Sigmoid colon (tissue), 7 donors: ENCODE measurements at regions of chr6 and their contacts with region 1.

Region 1: DNA sequence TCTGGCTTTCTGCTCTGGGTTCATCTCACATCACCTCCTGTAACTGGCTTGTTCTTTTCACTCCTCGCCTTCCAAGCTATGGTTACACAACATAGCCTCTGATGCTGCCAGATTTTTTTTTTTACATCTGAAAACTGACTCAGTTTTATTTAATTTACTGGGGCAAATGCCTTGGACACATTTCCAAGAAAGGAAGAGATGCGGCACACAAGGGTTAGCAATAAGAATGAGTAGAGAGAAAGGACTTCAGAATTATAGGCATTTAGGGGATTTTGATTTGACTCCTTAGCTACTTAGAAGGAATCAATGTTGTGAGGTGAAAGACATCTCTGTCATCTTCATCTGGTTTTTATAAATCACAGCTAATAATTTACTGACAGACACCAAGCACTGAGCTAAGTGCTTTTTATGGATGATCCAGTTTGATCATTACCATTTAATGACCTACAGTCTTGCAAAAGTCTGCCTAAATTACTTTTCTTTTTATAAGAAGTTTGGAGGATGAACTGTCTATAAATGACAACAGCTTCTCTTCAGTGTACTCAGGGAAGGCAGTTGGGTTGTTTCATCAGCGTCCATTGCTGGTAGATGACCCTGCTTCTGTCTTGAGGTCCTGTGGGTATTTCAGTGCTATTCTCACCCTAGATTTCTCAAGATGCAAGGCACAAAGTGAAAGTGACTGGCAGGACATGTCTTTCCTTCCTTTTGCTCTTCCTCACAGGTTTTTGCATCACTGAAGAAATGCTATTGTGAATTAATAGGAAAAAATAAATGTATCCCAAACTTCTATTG is 31.1 kb downstream of the LAMA4 start:
- DNase-seq: no peak
- H3K4me3 ChIP-seq: no peak overlapping the region
- H3K27ac ChIP-seq: peak overlapping the region; percentile 79 to 89 (median 84)
- H3K4me1 ChIP-seq: peaks cover 0 to 99% (median 94%) of the 10 kb centered on the region in 4 donors
- H3K27me3 ChIP-seq: no peaks in the 10 kb centered on the region
- CTCF ChIP-seq: no peak
- EP300 ChIP-seq: peak in 3 of 4 donors; percentile 32 to 64 (median 37)
- POLR2A ChIP-seq: no peak

Region 2: GRCh38 chr6:112245511-112246203 is 22.4 kb after region 1 on chr6:
- intact Hi-C with region 1: loop called (anchors 1 kb)
- DNase-seq: no peak
- H3K4me3 ChIP-seq: no peak overlapping the region
- H3K27ac ChIP-seq: peak overlapping the region; percentile 70 to 95 (median 91)
- H3K4me1 ChIP-seq: peaks cover 0 to 95% (median 90%) of the 10 kb centered on the region in 4 donors
- H3K27me3 ChIP-seq: no peaks in the 10 kb centered on the region
- CTCF ChIP-seq: no peak
- EP300 ChIP-seq: no peak
- POLR2A ChIP-seq: no peak

Region 3: DNA sequence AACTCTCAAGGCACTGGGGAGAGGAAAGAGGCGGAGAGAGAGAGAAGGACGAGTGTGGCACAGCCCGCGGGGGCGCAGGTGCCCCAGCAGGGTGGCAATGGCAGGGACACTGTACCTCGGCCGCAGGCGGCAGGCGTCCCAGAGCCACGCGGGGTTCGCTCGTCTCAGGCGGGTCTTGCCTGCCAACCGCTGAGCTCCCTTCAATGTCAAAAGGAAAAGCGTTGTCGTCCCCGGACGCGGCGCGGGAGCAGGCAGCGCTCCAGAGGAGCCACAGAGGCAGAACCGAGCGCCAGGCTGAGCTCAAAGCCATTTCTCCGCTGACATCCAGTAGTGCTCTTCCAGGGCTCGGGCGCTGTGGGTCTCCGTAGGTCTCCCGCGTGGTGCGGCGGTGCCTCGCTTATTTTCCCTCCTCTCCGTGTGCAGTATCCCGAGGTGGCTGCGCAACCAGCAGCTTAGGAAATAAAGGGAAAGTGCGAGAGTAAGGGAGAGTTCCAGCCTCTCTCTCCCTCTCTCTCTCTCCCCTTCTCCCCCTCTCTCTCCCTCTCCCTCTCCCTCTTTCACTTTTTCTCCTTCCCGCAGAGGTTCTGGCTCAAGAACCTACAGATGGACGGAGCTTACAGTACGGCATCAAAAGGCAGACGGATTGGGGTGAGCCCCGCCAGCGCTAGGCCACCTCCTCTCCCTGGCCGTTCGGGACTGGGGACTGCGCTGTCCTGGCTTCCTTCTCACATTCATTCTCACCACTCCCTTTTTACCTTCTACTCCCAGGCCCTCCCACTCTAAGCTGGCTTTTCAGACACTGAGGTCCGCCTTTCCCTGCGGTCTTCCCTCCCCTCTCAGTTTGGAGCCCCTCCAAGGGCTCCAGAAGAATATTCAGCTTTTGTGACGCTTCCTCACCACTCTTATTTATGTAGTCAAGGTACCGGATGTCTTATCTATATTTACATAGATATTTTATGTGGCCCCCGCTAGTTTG is 30.9 kb after region 1 on chr6 and contains the start of gene LAMA4:
- intact Hi-C with region 1: loop called (anchors 2 kb)
- DNase-seq: peak; percentile 77
- H3K4me3 ChIP-seq: peak within 1 kb of the TSS; percentile 62 to 84 (median 76)
- H3K27ac ChIP-seq: peak within 1 kb of the TSS; percentile 88 to 95 (median 91)
- H3K4me1 ChIP-seq: peaks cover 0 to 41% (median 33%) of the 10 kb centered on the region in 4 donors
- H3K27me3 ChIP-seq: no peaks in the 10 kb centered on the region
- CTCF ChIP-seq: no peak
- EP300 ChIP-seq: peak in 1 of 4 donors; percentile 3
- POLR2A ChIP-seq: peak; percentile 6 to 49
- total RNA-seq, gene LAMA4: 95.3 to 225 (median 140) TPM

Region 4: DNA sequence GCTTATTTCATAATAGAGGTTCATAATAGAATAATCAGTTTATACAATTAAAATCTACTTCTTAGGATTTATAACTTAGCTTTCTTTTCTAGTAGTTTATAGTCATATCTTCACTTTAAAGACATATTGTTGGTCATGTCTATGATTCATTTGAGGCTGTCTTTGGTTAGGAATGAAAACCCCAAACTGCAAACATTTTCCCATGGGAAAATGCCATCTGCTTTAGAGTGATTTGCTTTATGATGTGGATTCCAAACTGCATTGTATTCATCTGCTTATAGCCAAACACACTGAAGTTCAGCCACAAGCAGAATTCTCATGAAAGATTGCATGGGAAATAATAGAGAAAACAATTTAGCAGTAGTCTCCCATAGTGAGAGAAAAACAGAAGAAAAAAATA is 251.8 kb after region 1 on chr6:
- intact Hi-C with region 1: no loop called
- DNase-seq: no peak
- H3K4me3 ChIP-seq: no peak overlapping the region
- H3K27ac ChIP-seq: no peak overlapping the region
- H3K4me1 ChIP-seq: no peaks in the 10 kb centered on the region
- H3K27me3 ChIP-seq: no peaks in the 10 kb centered on the region
- CTCF ChIP-seq: no peak
- EP300 ChIP-seq: no peak
- POLR2A ChIP-seq: no peak